HEK293T (cell line): ENCODE measurements at regions of chr22 and their contacts with region 1.

Region 1: DNA sequence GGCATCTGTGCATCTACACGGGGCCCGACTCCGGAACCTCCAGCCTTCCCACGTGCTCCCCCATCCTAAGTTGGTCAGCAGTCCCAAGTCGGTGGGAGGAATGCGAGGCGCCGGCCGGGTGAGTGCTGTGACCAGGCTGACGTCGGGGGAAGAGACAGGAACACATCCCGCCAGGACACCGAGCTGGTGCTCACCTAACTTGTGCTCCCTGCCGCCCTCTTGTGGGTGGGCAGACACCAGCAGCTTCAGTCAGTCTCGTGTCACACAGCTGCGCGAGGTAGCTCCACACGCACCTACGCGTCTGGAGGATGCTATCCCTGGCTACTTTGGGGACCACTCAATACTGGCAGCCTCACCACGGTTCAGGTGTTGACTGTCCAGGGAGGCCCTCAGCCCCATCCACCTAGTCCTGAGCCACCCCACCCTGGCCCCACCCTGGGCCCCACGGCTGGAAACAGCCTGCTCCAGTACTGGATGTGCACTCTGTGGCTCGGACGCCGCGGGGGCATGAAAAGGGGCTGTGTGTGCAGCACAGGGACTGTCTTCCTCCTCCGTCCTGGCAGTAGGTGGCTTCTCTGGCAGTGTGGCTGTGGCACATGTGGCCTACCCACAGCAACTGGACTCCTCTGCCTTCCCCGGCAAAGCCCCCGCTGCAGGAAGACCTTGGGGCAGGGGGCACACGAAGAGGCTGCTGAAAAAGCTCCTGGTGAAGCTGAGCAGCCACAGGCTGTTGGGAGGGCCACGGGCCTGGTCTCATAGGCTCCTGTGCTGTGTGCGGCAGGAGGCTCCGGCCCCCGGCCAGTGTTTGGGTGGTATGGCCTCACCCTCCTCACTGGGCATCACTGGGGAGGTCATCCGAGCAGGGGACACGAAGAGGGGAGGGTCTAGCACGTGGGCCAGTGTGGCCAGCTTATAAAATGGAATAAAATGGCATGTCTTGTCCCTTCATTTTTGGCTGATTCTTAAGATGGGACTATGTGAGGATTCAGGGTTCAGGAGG is 11.2 kb upstream of the BID start:
- DNase-seq: peak; percentile 91

Region 2: DNA sequence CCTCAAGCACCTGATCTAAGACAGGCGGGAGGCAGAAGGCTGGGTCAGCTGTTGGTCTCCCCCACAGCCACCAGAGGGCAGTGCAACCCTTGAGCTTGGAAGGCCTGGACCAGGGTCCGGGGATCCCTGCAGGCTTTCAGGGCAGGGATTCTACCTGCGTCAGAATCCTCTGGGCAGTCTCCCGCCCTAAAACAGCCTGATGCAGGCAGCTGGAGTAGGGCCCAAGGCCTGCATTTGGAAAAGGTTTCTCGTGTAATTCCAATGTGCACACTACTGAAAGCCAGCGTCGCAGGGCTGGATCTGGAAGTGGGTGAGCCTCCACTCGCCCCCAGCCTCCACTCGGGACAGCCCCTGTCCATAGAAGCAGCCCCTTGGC is 43.0 kb before region 1 on chr22:
- CTCF ChIA-PET with region 1: interaction called, 64 read pairs
- POLR2A ChIA-PET with region 1: interaction called, 6 read pairs
- DNase-seq: peak; percentile 95

Region 3: DNA sequence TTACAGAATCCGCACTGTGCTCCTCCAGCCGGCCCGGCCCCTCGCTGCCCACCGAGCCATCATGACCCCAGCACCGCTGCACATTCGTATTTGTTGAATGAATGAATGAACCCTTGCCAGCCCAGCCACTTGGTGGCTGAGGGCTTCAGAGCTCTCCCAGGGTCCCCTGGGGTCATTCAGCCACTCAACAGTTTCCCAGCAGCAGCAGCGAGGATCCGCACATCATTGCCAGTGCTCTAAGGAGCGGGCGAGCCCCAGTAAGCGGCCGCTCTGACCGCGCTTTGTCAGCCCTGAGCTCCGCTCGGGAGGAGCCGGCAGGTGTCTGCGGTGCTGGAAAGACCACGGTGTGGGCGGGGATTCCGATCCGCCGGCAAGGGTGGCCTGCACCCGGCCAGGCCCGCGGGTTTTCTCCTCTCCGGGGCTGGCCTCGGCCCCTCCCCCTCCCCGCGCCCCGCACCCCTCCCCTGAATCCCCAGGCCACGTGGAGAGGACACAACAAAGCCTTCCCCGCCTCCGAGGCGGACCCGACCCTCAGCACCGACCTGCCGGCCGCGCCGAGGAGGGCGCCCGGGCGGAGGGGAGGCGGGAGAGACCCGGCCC is 11.8 kb before region 1 on chr22:
- CTCF ChIA-PET with region 1: interaction called, 10 read pairs
- POLR2A ChIA-PET with region 1: interaction called, 6 read pairs
- DNase-seq: peak; percentile 67